CD4-positive, alpha-beta memory T cell (primary cell): ENCODE measurements at regions of chr15 and their contacts with region 1.

Region 1: GRCh38 chr15:88904624-88905327 is 8.4 kb downstream of the MFGE8 start:
- DNase-seq: peak; percentile 94 to 99 (median 97)
- H3K4me3 ChIP-seq: peak overlapping the region in 1 of 2 donors; percentile 13
- H3K4me3 Mint-ChIP-seq: peak overlapping the region; percentile 25 to 81 (median 58)
- H3K27ac ChIP-seq: peak overlapping the region; percentile 77
- H3K27ac Mint-ChIP-seq: peak overlapping the region; percentile 94 to 98 (median 96)
- H3K4me1 ChIP-seq: peaks cover 38% of the 10 kb centered on the region
- H3K4me1 Mint-ChIP-seq: peaks cover 27 to 65% (median 47%) of the 10 kb centered on the region in 4 donors
- H3K27me3 ChIP-seq: no peaks in the 10 kb centered on the region
- H3K27me3 Mint-ChIP-seq: no peaks in the 10 kb centered on the region

Region 2: GRCh38 chr15:88467073-88467934 is 437.5 kb before region 1 on chr15 and contains the starts of genes MRPL46 and MRPS11:
- CTCF ChIA-PET with region 1: interaction called, 3 read pairs
- POLR2A ChIA-PET with region 1: no interaction called
- intact Hi-C with region 1: loop called (anchors 5 kb)
- DNase-seq: peak; percentile 89 to 93 (median 90)
- H3K4me3 ChIP-seq: peak within 1 kb of the TSS; percentile 87 to 90
- H3K4me3 Mint-ChIP-seq: peak within 1 kb of the TSS; percentile 96 to 99 (median 98)
- H3K27ac ChIP-seq: peak within 1 kb of the TSS; percentile 93
- H3K27ac Mint-ChIP-seq: peak within 1 kb of the TSS; percentile 98 to 100 (median 99)
- H3K4me1 ChIP-seq: peaks cover 29% of the 10 kb centered on the region
- H3K4me1 Mint-ChIP-seq: peaks cover 15 to 38% (median 30%) of the 10 kb centered on the region in 4 donors
- H3K27me3 ChIP-seq: no peaks in the 10 kb centered on the region
- H3K27me3 Mint-ChIP-seq: no peaks in the 10 kb centered on the region
- total RNA-seq, gene MRPL46: 25.9 to 28.7 TPM
- total RNA-seq, gene MRPS11: 27.5 to 35.0 TPM

Region 3: DNA sequence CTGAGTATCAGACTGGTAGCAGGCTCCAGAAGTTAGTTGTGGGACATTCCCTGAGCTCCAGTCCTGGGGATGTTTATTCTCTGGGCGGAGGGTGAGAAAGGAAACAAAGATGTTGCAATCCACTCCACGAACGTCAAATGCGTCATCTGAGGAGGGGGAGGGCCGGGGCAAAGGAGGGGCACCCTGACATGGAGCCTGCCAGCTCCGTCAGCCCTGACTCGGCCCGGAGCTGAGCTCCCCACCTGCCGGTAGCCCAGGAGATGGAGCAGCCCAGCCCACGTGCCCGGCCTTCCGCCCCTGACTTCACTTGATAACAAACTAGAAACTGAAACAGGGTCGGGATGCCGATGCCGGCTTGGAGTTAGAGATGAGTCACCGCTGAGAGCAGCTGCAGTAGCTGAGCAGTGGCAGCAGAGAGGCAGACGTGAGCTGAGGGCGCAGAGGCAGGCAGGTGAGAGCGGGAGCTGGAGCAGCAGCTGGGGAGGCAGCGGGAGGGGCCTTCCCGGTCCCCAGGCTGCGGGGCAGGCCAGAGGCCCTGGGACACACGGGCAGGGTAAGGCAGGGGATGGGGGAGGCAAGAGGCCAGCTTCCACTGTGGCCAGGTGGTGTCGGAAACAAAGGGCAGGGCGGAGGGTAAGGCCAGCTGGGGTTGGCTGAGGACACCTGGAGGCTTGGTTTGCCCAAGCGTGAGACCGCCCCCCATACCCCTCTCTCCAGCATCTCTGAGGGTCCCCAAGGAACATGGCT is 266.0 kb before region 1 on chr15 and contains the start of gene ISG20:
- CTCF ChIA-PET with region 1: interaction called, 11 read pairs
- POLR2A ChIA-PET with region 1: interaction called, 11 read pairs
- intact Hi-C with region 1: loop called (anchors 1 kb)
- DNase-seq: peak; percentile 97 to 100 (median 99)
- H3K4me3 ChIP-seq: peak within 1 kb of the TSS; percentile 55 to 94
- H3K4me3 Mint-ChIP-seq: peak within 1 kb of the TSS; percentile 88 to 98 (median 95)
- H3K27ac ChIP-seq: peak within 1 kb of the TSS; percentile 100
- H3K27ac Mint-ChIP-seq: peak within 1 kb of the TSS; percentile 89 to 100 (median 99)
- H3K4me1 ChIP-seq: peaks cover 96% of the 10 kb centered on the region
- H3K4me1 Mint-ChIP-seq: peaks cover 55 to 86% (median 74%) of the 10 kb centered on the region in 4 donors
- H3K27me3 ChIP-seq: no peaks in the 10 kb centered on the region
- H3K27me3 Mint-ChIP-seq: no peaks in the 10 kb centered on the region
- total RNA-seq, gene ISG20: 144 to 153 TPM

Region 4: GRCh38 chr15:89003865-89004725 is 99.3 kb after region 1 on chr15:
- CTCF ChIA-PET with region 1: interaction called, 33 read pairs
- POLR2A ChIA-PET with region 1: interaction called, 3 read pairs
- intact Hi-C with region 1: no loop called
- DNase-seq: no peak
- H3K4me3 ChIP-seq: no peak overlapping the region
- H3K4me3 Mint-ChIP-seq: no peak overlapping the region
- H3K27ac ChIP-seq: no peak overlapping the region
- H3K27ac Mint-ChIP-seq: peak overlapping the region in 2 of 7 donors; percentile 25 to 52
- H3K4me1 ChIP-seq: no peaks in the 10 kb centered on the region
- H3K4me1 Mint-ChIP-seq: peaks cover 0 to 6% (median 0%) of the 10 kb centered on the region in 4 donors
- H3K27me3 ChIP-seq: no peaks in the 10 kb centered on the region
- H3K27me3 Mint-ChIP-seq: peaks cover 3 to 4% of the 10 kb centered on the region in 2 donors

Region 5: GRCh38 chr15:89057504-89058133 is 152.8 kb after region 1 on chr15:
- CTCF ChIA-PET with region 1: interaction called, 50 read pairs
- POLR2A ChIA-PET with region 1: no interaction called
- intact Hi-C with region 1: no loop called
- DNase-seq: peak; percentile 75 to 84 (median 79)
- H3K4me3 ChIP-seq: no peak overlapping the region
- H3K4me3 Mint-ChIP-seq: no peak overlapping the region
- H3K27ac ChIP-seq: no peak overlapping the region
- H3K27ac Mint-ChIP-seq: no peak overlapping the region
- H3K4me1 ChIP-seq: no peaks in the 10 kb centered on the region
- H3K4me1 Mint-ChIP-seq: peaks cover 0 to 12% (median 7%) of the 10 kb centered on the region in 4 donors
- H3K27me3 ChIP-seq: no peaks in the 10 kb centered on the region
- H3K27me3 Mint-ChIP-seq: no peaks in the 10 kb centered on the region

Region 6: GRCh38 chr15:89171136-89172072 is 266.6 kb after region 1 on chr15:
- CTCF ChIA-PET with region 1: interaction called, 18 read pairs
- POLR2A ChIA-PET with region 1: interaction called, 3 read pairs
- intact Hi-C with region 1: no loop called
- DNase-seq: peak in 2 of 5 donors; percentile 22 to 24
- H3K4me3 ChIP-seq: no peak overlapping the region
- H3K4me3 Mint-ChIP-seq: no peak overlapping the region
- H3K27ac ChIP-seq: no peak overlapping the region
- H3K27ac Mint-ChIP-seq: no peak overlapping the region
- H3K4me1 ChIP-seq: peaks cover 12% of the 10 kb centered on the region
- H3K4me1 Mint-ChIP-seq: peaks cover 4 to 10% (median 6%) of the 10 kb centered on the region in 4 donors
- H3K27me3 ChIP-seq: no peaks in the 10 kb centered on the region
- H3K27me3 Mint-ChIP-seq: no peaks in the 10 kb centered on the region